Right lobe of liver (tissue), 6 donors: ENCODE measurements at regions of chr10 and their contacts with region 1.

Region 1: DNA sequence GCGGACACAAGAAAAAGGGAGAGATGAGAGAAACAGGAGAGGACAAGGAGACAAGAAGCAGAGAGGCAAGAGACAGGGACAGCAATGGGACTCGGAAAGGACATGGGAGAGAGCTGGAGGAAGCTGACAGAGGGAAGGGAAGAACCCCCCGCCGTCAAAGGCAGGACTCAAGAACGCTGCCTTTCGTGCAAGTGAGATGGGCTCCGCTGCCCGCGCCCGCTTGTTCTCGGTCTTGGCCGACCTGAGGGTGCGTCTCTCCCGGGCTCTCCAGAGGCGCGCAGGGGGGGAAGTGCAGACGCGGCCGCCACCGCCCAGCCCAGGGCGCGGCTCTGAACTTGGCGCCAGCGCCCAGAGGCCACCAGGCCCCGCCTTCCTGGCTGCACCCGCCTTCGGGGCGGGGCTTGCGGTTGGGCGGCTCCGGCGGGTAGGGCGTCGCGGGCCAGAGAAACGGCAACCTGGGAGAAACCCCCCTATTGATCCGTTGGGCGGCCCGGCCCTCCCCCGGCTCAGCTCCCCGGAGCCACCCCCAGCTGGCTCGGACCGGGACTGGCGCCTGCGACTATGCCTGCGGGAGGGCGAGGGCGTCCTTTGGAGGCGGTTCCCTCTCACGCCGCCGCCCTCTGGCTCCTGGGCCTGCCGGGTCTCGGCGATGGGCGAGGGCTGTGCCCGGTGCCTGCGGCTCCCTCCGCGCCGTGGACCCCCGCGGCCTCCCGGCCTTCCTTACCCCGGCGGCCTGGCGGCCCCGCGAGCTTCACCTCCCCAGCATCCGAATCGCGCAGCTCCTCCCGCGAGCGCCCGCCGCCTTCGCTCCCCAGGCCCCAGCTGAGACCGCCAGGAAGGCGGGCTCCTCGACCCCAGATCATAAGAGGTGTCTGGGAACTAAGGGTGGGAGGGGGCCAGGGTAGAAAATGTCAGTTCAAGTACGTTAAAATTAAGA is 2.2 kb upstream of the ANTXRL start:
- DNase-seq: peak; percentile 86 to 92 (median 89)
- ATAC-seq: peak; percentile 87 to 91 (median 88)
- H3K4me3 ChIP-seq: peak overlapping the region; percentile 62 to 75 (median 65)
- H3K27ac ChIP-seq: peak overlapping the region; percentile 49 to 77 (median 75)
- H3K4me1 ChIP-seq: peaks cover 0 to 3% (median 1%) of the 10 kb centered on the region in 4 donors
- H3K27me3 ChIP-seq: no peaks in the 10 kb centered on the region
- CTCF ChIP-seq: no peak
- POLR2A ChIP-seq: no peak

Region 2: GRCh38 chr10:47384148-47384921 is 1099.8 kb after region 1 on chr10 and contains the start of gene ZNF488:
- intact Hi-C with region 1: loop called (anchors 5 kb)
- DNase-seq: peak; percentile 90 to 91 (median 91)
- ATAC-seq: peak; percentile 99
- H3K4me3 ChIP-seq: peak within 1 kb of the TSS; percentile 65 to 70 (median 66)
- H3K27ac ChIP-seq: peak within 1 kb of the TSS; percentile 11 to 58 (median 44)
- H3K4me1 ChIP-seq: peaks cover 0 to 3% (median 0%) of the 10 kb centered on the region in 4 donors
- H3K27me3 ChIP-seq: no peaks in the 10 kb centered on the region
- CTCF ChIP-seq: no peak
- POLR2A ChIP-seq: peak; percentile 23
- total RNA-seq, gene ZNF488: not detected